Calu3 (cell line): ENCODE measurements at regions of chr17 and their contacts with region 1.

Region 1: DNA sequence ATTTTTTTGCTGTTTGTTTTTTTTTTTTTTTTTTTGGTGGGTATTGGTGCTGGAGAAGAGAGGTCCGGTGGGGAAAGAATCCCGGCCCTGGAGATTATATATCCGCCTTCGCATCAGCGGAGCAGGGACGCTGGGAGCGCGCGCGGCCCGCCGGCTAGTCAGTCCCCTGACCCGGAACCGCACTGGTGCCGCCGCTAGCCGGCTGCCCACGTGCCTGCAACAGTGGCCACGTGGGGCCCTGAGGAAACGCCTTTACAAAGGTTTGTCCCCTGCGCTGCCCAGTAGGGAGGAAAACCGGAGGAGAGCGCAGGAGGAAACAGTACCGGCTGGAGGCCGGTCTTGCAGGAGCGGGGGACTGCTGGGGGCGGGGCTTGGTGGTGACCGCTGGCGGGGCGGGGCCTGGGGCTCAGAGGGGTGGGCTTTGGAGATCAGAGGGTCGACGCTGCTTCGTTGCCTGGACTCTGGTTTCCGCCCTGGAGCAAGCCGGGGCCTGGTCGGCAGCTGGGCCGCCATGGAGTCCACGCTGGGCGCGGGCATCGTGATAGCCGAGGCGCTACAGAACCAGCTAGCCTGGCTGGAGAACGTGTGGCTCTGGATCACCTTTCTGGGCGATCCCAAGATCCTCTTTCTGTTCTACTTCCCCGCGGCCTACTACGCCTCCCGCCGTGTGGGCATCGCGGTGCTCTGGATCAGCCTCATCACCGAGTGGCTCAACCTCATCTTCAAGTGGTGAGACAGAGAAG is at the start of gene G6PC3:
- DNase-seq: peak; percentile 99
- H3K4me3 Mint-ChIP-seq: peak within 1 kb of the TSS; percentile 99
- H3K27ac Mint-ChIP-seq: peak within 1 kb of the TSS; percentile 74
- H3K4me1 Mint-ChIP-seq: peaks cover 39% of the 10 kb centered on the region
- H3K27me3 Mint-ChIP-seq: no peaks in the 10 kb centered on the region
- CTCF ChIP-seq: no peak
- total RNA-seq, gene G6PC3: 99.6 and 103 TPM in 2 replicates

Region 2: DNA sequence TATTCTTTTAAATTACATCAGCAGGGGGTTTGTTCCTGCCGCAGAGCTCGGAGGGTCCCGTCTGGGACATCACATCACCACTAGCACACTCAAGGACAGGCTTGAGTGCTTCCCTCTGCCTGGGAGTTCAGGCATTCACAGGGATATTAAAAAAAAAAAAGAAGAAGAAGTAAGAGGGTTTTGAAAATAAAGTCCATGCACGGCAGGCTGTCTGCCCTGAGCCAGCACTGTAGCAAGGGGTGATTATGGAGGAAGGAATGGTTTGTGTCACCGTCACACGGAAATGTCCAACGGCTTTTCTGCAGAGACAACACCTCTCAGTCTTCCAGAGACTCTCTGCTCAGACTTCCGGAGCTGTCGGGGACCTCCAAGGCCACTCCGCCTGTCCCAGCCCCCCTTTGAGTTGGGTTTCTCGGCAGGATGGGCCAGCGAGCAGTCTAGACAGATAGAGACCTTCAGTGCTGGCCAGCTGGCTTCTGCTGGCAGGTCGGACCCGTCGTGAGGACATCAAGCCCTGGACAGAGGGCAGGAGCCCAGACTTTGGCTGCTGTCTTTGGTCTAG is 442.5 kb before region 1 on chr17:
- CTCF ChIA-PET with region 1: no interaction called
- intact Hi-C with region 1: no loop called
- DNase-seq: no peak
- H3K4me3 Mint-ChIP-seq: no peak overlapping the region
- H3K27ac Mint-ChIP-seq: no peak overlapping the region
- H3K4me1 Mint-ChIP-seq: no peaks in the 10 kb centered on the region
- H3K27me3 Mint-ChIP-seq: peaks cover 98% of the 10 kb centered on the region
- CTCF ChIP-seq: no peak

Region 3: DNA sequence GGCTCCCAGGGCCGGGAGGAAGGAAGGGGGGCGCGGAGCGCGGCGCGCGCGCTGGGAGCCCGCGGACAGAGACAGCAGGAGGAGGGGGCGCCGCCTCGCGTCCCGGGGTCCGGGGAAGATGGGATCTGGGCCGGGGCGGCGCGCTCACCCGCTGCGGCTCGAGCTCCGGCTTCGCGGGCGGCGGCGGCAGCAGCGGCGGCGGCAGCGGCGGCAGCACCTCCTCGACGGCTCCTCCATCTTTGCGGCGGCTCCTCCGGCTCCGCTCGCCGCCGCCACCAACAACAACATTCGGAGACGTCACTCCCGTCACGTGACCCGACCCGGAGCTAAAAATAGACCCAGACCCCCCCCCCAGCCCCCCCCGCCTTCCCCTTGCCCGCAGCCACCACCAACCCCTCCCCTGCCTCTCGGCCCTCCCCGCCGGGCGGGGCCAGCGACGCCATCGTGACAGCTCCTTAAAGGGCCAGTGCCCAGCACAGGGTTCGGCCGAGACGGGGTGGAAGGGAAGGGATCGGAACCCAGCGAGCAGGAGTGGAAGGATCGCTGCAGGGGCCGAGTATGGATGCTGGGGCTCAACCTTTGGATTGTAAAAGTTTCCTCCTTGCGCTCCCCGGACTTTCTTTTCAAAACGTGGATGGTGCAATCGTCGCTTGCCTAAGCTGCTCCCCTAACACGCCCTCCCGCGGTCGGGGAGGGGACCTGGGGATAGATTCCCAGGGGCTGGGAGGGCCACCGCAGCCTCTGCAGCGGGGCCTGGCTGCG is 52.9 kb after region 1 on chr17 and contains the start of gene HDAC5:
- CTCF ChIA-PET with region 1: interaction called, 10 read pairs
- intact Hi-C with region 1: no loop called
- DNase-seq: peak; percentile 98
- H3K4me3 Mint-ChIP-seq: peak within 1 kb of the TSS; percentile 86
- H3K27ac Mint-ChIP-seq: peak within 1 kb of the TSS; percentile 93
- H3K4me1 Mint-ChIP-seq: no peaks in the 10 kb centered on the region
- H3K27me3 Mint-ChIP-seq: peaks cover 21% of the 10 kb centered on the region
- CTCF ChIP-seq: peak; percentile 80
- total RNA-seq, gene HDAC5: 22.4 and 22.8 TPM in 2 replicates